CD4-positive, alpha-beta T cell (primary cell): ENCODE measurements at regions of chr3 and their contacts with region 1.

Region 1: DNA sequence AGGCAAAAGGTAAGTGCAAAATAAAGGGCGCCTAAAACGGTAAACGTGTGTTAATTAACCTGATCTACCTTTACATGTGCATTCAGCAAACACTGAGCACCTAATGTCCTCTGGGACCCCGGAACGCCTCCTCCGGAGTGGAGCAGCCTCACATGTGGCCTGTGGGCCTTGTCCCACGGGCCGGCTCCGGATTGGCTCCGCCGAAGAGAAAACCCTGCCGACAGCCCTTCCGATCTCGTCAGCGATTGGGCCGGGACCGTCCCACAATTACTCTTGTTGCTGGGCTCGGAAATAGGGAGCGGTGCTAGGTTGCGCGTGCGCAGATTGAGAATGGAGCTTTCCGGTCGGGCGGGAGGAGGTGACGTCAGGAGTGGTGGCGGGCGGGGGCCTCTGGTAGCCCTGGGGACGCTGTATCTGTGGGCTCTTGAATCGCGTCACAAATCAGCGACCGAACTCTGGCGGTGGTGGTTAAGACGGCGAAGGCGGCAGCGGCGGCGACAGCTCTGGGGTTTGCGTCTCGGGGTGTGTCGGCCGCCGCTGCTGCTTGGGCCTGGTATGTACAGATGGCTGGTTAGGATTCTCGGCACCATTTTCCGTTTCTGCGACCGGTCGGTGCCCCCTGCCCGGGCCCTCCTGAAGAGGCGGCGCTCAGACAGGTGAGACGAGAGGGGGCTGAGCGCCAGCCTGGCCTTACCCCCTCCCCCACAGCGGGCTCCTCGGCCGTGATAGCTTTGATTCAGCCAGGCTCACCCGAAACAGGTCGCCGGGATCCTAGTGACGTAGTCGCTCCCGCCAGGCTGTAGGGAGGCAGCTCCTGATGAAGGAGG is at the start of gene SENP2:
- DNase-seq: peak; percentile 98 to 100 (median 99)
- ATAC-seq: peak; percentile 90
- H3K4me3 ChIP-seq: peak within 1 kb of the TSS; percentile 98
- H3K4me3 Mint-ChIP-seq: peak within 1 kb of the TSS; percentile 87
- H3K27ac ChIP-seq: peak within 1 kb of the TSS; percentile 91 to 98
- H3K27ac Mint-ChIP-seq: peak within 1 kb of the TSS; percentile 85
- H3K4me1 ChIP-seq: peaks cover 30% of the 10 kb centered on the region
- H3K4me1 Mint-ChIP-seq: peaks cover 28% of the 10 kb centered on the region
- H3K27me3 ChIP-seq: no peaks in the 10 kb centered on the region
- H3K27me3 Mint-ChIP-seq: no peaks in the 10 kb centered on the region
- CTCF ChIP-seq: no peak
- total RNA-seq, gene SENP2: 61.1 to 61.2 TPM

Region 2: GRCh38 chr3:183884427-183885296 is 1701.4 kb before region 1 on chr3 and contains the start of gene PARL:
- CTCF ChIA-PET with region 1: no interaction called
- POLR2A ChIA-PET with region 1: interaction called, 4 read pairs
- intact Hi-C with region 1: loop called in 1 of 2 experiments (anchors 10 kb)
- DNase-seq: peak; percentile 93 to 98 (median 96)
- ATAC-seq: peak; percentile 100
- H3K4me3 ChIP-seq: peak within 1 kb of the TSS; percentile 97
- H3K4me3 Mint-ChIP-seq: peak within 1 kb of the TSS; percentile 97
- H3K27ac ChIP-seq: peak within 1 kb of the TSS; percentile 66
- H3K27ac Mint-ChIP-seq: peak within 1 kb of the TSS; percentile 82
- H3K4me1 ChIP-seq: peaks cover 37% of the 10 kb centered on the region
- H3K4me1 Mint-ChIP-seq: peaks cover 36% of the 10 kb centered on the region
- H3K27me3 ChIP-seq: no peaks in the 10 kb centered on the region
- H3K27me3 Mint-ChIP-seq: no peaks in the 10 kb centered on the region
- CTCF ChIP-seq: peak; percentile 91
- total RNA-seq, gene PARL: 36.9 to 40.0 TPM

Region 3: GRCh38 chr3:184811999-184812661 is 773.9 kb before region 1 on chr3 and contains the start of gene VPS8:
- CTCF ChIA-PET with region 1: no interaction called
- POLR2A ChIA-PET with region 1: interaction called, 3 read pairs
- intact Hi-C with region 1: loop called in 1 of 2 experiments (anchors 10 kb)
- DNase-seq: peak; percentile 91 to 98 (median 96)
- ATAC-seq: peak; percentile 85
- H3K4me3 ChIP-seq: peak within 1 kb of the TSS; percentile 84
- H3K4me3 Mint-ChIP-seq: peak within 1 kb of the TSS; percentile 95
- H3K27ac ChIP-seq: peak within 1 kb of the TSS; percentile 86 to 87
- H3K27ac Mint-ChIP-seq: peak within 1 kb of the TSS; percentile 90
- H3K4me1 ChIP-seq: peaks cover 28% of the 10 kb centered on the region
- H3K4me1 Mint-ChIP-seq: peaks cover 59% of the 10 kb centered on the region
- H3K27me3 ChIP-seq: no peaks in the 10 kb centered on the region
- H3K27me3 Mint-ChIP-seq: no peaks in the 10 kb centered on the region
- CTCF ChIP-seq: peak; percentile 64
- total RNA-seq, gene VPS8: 56.8 to 61.2 TPM

Region 4: DNA sequence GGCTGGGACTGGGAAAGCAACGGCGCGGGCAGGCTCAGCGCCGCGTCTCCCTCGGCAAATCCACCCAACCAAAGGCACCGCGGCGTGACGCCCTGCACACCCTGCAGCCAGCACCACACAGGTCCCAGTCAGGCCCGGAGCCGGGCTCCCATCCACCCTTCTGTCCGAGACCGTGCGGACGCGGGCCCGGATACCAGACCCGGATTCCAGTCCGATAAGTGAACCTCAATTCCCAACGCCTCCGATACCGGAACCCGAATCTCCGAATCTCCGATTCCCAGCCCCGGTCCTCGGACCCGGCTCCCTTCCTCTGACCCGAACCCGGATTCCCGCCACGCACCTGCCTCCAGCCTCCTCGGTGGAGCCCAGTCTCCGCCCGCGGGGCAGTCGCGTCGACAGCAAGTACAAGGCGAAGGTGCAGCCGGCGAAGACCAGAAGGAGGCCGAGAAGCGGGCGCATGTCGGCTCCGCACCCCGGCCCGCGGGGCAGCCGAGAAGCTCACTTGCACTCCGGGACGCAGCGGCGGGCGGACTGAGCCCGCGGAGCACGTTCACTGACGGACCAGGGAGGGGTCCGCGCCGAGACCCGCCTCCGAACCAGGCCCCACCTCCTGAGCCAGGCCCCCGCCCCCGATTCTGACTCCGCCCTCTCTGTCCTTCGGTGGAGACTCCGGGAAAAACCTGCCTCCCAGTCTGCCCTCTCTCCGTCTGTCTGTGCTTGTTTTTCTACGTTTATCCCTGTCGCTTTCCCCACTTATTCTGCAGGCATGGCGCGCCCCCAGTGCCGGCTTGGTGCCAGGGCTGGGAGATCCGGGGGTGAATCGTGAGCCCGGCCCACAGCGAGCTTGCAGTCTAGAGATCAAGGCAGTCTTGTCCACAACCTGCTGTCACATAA is 87.3 kb before region 1 on chr3 and contains the start of gene TMEM41A:
- CTCF ChIA-PET with region 1: no interaction called
- POLR2A ChIA-PET with region 1: interaction called, 22 read pairs
- intact Hi-C with region 1: loop called in 1 of 2 experiments (anchors 2 kb)
- DNase-seq: peak; percentile 80 to 91 (median 86)
- ATAC-seq: peak; percentile 98
- H3K4me3 ChIP-seq: peak within 1 kb of the TSS; percentile 97
- H3K4me3 Mint-ChIP-seq: peak within 1 kb of the TSS; percentile 97
- H3K27ac ChIP-seq: peak within 1 kb of the TSS; percentile 24 to 69
- H3K27ac Mint-ChIP-seq: peak within 1 kb of the TSS; percentile 87
- H3K4me1 ChIP-seq: peaks cover 22% of the 10 kb centered on the region
- H3K4me1 Mint-ChIP-seq: peaks cover 24% of the 10 kb centered on the region
- H3K27me3 ChIP-seq: no peaks in the 10 kb centered on the region
- H3K27me3 Mint-ChIP-seq: no peaks in the 10 kb centered on the region
- CTCF ChIP-seq: no peak
- total RNA-seq, gene TMEM41A: 26.8 to 29.1 TPM

Region 5: DNA sequence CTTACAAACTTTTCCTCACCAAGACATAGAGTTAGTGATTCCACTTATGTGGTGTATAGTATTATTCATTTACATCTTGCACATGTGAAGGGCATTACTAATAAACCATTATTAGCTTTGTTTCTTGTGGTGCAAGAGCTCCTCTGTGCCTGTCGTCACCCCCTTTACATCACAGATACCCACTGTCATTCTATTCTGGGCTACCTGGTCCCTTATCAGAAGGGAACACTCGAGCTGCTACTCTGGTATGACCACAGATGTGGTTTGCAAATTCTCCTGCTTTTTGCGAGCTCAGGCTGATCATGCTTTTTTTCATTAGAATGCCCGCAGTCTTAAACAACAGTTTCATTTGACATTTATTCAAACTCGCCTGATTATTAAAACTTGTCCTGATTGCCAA is 13.9 kb before region 1 on chr3:
- CTCF ChIA-PET with region 1: interaction called, 12 read pairs
- POLR2A ChIA-PET with region 1: interaction called, 10 read pairs
- intact Hi-C with region 1: no loop called
- DNase-seq: no peak
- ATAC-seq: no peak
- H3K4me3 ChIP-seq: no peak overlapping the region
- H3K4me3 Mint-ChIP-seq: no peak overlapping the region
- H3K27ac ChIP-seq: no peak overlapping the region
- H3K27ac Mint-ChIP-seq: no peak overlapping the region
- H3K4me1 ChIP-seq: peaks cover 2% of the 10 kb centered on the region
- H3K4me1 Mint-ChIP-seq: peaks cover 7% of the 10 kb centered on the region
- H3K27me3 ChIP-seq: no peaks in the 10 kb centered on the region
- H3K27me3 Mint-ChIP-seq: no peaks in the 10 kb centered on the region
- CTCF ChIP-seq: no peak

Region 6: GRCh38 chr3:185878920-185879319 is 292.8 kb after region 1 on chr3:
- CTCF ChIA-PET with region 1: no interaction called
- POLR2A ChIA-PET with region 1: no interaction called
- intact Hi-C with region 1: no loop called
- DNase-seq: no peak
- ATAC-seq: no peak
- H3K4me3 ChIP-seq: no peak overlapping the region
- H3K4me3 Mint-ChIP-seq: no peak overlapping the region
- H3K27ac ChIP-seq: no peak overlapping the region
- H3K27ac Mint-ChIP-seq: no peak overlapping the region
- H3K4me1 ChIP-seq: no peaks in the 10 kb centered on the region
- H3K4me1 Mint-ChIP-seq: no peaks in the 10 kb centered on the region
- H3K27me3 ChIP-seq: no peaks in the 10 kb centered on the region
- H3K27me3 Mint-ChIP-seq: peaks cover 17% of the 10 kb centered on the region
- CTCF ChIP-seq: no peak

Region 7: GRCh38 chr3:186570096-186570940 is 984.2 kb after region 1 on chr3 and contains the start of gene DNAJB11:
- CTCF ChIA-PET with region 1: no interaction called
- POLR2A ChIA-PET with region 1: interaction called, 8 read pairs
- intact Hi-C with region 1: loop called in 1 of 2 experiments (anchors 5 kb)
- DNase-seq: peak; percentile 91 to 100 (median 97)
- ATAC-seq: peak; percentile 83
- H3K4me3 ChIP-seq: peak within 1 kb of the TSS; percentile 79
- H3K4me3 Mint-ChIP-seq: peak within 1 kb of the TSS; percentile 99
- H3K27ac ChIP-seq: peak within 1 kb of the TSS; percentile 90 to 94
- H3K27ac Mint-ChIP-seq: peak within 1 kb of the TSS; percentile 94
- H3K4me1 ChIP-seq: peaks cover 37% of the 10 kb centered on the region
- H3K4me1 Mint-ChIP-seq: peaks cover 69% of the 10 kb centered on the region
- H3K27me3 ChIP-seq: no peaks in the 10 kb centered on the region
- H3K27me3 Mint-ChIP-seq: no peaks in the 10 kb centered on the region
- CTCF ChIP-seq: no peak
- total RNA-seq, gene DNAJB11: 69.3 to 70.3 TPM